ENCODE measurements at regions of chr3 and their contacts with region 1.

Region 1: DNA sequence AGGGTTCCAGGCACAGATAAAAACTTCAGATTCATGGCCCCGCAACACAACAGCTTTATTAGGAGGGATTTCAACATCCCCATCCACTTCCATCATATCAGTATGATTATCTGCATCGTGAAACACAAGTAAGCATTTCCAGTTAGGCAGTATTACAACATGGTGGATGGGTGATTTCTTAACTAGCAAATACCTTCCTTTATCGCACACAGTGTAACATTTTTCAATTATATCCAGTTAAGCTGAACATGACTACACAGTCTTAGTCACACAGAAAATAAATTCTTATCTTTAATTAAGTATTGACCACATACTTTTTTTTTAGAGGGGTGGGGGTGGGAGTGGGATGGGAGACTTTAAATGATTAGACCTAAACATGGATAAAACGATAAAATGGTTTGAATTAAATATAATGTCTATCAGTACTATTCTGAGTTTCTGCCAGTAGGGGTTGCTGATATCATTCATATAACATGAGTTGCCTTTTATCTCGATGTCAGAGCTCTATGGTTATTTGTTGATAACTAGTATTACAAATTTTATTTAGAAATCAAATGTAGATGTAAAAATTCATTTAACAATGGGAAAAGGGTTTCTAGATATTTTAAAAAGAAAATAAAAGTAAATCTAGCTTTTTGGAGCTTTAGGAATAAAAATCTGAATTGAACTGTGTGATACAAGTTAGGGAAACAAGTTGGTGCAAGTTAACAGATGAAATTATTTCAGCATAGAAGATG is 146.6 kb downstream of the TBL1XR1 start:
- DNase-seq: no peak
- CTCF ChIP-seq: peak; percentile 64

Region 2: DNA sequence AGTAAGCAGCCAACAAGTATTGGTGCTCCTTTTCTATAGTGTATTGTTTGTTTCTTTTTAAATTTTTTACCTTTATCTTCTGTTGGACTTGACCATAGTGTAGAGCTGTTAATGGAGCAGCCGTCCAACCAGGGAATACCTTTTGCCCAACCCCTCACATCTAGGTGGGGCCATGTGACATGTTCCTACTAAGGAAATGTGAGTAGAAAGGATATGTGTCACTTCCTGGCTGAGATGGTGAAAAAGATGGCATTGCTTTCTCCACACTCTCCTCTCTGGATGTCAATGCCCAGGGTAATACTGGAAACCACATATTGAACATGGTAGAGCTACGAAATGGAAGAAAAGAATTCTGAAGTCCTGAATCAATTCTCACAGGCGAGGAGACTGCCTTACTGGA is 72.2 kb before region 1 on chr3:
- CTCF ChIA-PET with region 1: no interaction called
- POLR2A ChIA-PET with region 1: no interaction called
- DNase-seq: no peak
- CTCF ChIP-seq: no peak

Region 3: DNA sequence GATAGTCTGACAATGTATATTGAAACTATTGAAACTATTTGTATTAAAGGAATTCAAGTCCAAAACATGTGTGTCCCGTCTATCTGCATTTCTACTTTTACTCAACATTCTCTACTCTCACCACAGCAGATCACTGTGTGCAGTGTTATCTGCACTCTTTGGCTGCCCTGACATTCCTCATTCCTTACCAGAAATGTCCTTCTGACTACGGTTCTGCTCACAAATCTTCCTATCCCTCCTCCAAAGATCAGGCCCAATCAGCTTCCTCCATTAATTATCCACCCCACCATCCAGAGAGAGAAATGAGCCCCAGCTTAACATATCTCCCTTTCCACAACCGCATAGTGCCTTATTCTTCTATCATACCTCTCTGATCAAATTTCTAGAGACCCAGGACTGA is 51.9 kb after region 1 on chr3:
- CTCF ChIA-PET with region 1: no interaction called
- POLR2A ChIA-PET with region 1: no interaction called
- DNase-seq: no peak
- CTCF ChIP-seq: no peak

Region 4: DNA sequence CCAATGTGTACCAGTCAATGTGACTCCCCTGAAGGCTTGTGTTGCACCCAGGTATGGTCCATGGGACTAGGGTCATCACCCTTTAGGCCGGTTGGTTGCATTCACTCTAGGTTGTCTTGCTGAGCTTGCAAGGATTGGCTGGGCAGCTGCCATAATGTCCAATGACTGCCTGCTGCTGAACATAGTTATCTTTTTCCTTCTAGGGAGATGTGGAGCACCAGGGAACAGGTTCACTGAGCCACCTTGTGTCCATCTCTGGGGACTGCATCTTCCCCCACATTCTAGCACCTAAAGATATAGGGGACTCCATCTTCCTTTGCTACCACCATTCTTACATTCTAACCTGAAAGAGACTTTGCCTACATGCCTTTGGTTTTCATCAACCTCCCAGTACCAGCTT is 727.0 kb after region 1 on chr3:
- CTCF ChIA-PET with region 1: interaction called, 18 read pairs
- POLR2A ChIA-PET with region 1: no interaction called
- DNase-seq: peak; percentile 37
- CTCF ChIP-seq: peak; percentile 53

Measured in GM10248 (cell line).